ENCODE measurements at regions of chr5 and their contacts with region 1.

Region 1: GRCh38 chr5:146203011-146203871 is at the start of gene RBM27:
- DNase-seq: peak; percentile 96
- H3K4me3 ChIP-seq: peak within 1 kb of the TSS; percentile 96 to 97
- H3K27ac ChIP-seq: peak within 1 kb of the TSS; percentile 83
- H3K4me1 ChIP-seq: no peaks in the 10 kb centered on the region
- H3K27me3 ChIP-seq: no peaks in the 10 kb centered on the region
- CTCF ChIP-seq: no peak
- POLR2A ChIP-seq: peak; percentile 60
- total RNA-seq, gene RBM27: 20.9 to 58.9 TPM

Region 2: GRCh38 chr5:146188358-146188757 is 14.9 kb before region 1 on chr5:
- intact Hi-C with region 1: loop called (anchors 2 kb)
- DNase-seq: no peak
- H3K4me3 ChIP-seq: no peak overlapping the region
- H3K27ac ChIP-seq: no peak overlapping the region
- H3K4me1 ChIP-seq: no peaks in the 10 kb centered on the region
- H3K27me3 ChIP-seq: no peaks in the 10 kb centered on the region
- CTCF ChIP-seq: no peak
- POLR2A ChIP-seq: no peak

Region 3: DNA sequence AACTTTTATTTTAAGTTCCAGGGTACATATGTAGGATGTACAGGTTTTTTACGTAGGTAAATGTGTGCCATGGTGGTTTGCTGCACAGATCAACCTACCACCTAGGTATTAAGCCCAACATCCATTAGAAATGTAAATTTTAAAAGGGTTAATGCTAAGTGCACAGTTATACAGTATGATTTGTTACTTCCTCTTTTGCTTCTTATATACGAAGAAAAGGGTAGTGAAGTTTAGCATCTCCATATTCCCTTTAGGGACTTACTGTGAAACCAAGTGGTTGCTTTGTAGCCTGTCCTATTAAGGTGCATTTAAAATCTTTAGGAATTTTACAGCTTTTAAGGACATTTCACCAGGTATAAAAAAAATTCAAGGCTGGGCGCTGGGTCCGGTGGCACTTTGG is 46.6 kb after region 1 on chr5:
- intact Hi-C with region 1: no loop called
- DNase-seq: no peak
- H3K4me3 ChIP-seq: no peak overlapping the region
- H3K27ac ChIP-seq: no peak overlapping the region
- H3K4me1 ChIP-seq: no peaks in the 10 kb centered on the region
- H3K27me3 ChIP-seq: no peaks in the 10 kb centered on the region
- CTCF ChIP-seq: no peak
- POLR2A ChIP-seq: no peak

Region 4: GRCh38 chr5:146273109-146273508 is 69.9 kb after region 1 on chr5:
- intact Hi-C with region 1: no loop called
- DNase-seq: no peak
- H3K4me3 ChIP-seq: no peak overlapping the region
- H3K27ac ChIP-seq: no peak overlapping the region
- H3K4me1 ChIP-seq: no peaks in the 10 kb centered on the region
- H3K27me3 ChIP-seq: no peaks in the 10 kb centered on the region
- CTCF ChIP-seq: no peak
- POLR2A ChIP-seq: no peak

Region 5: GRCh38 chr5:146446853-146447733 is 243.9 kb after region 1 on chr5 and contains the start of gene TCERG1:
- intact Hi-C with region 1: loop called (anchors 10 kb)
- DNase-seq: peak; percentile 100
- H3K4me3 ChIP-seq: peak within 1 kb of the TSS; percentile 93 to 97
- H3K27ac ChIP-seq: peak within 1 kb of the TSS; percentile 78 to 87
- H3K4me1 ChIP-seq: no peaks in the 10 kb centered on the region
- H3K27me3 ChIP-seq: no peaks in the 10 kb centered on the region
- CTCF ChIP-seq: peak; percentile 76 to 94 (median 90)
- POLR2A ChIP-seq: peak; percentile 28
- total RNA-seq, gene TCERG1: 41.4 to 83.0 TPM

Measured in prostate gland (tissue), 2 donors.